Gastrocnemius medialis (tissue), 4 donors: ENCODE measurements at regions of chr1 and their contacts with region 1.

Region 1: DNA sequence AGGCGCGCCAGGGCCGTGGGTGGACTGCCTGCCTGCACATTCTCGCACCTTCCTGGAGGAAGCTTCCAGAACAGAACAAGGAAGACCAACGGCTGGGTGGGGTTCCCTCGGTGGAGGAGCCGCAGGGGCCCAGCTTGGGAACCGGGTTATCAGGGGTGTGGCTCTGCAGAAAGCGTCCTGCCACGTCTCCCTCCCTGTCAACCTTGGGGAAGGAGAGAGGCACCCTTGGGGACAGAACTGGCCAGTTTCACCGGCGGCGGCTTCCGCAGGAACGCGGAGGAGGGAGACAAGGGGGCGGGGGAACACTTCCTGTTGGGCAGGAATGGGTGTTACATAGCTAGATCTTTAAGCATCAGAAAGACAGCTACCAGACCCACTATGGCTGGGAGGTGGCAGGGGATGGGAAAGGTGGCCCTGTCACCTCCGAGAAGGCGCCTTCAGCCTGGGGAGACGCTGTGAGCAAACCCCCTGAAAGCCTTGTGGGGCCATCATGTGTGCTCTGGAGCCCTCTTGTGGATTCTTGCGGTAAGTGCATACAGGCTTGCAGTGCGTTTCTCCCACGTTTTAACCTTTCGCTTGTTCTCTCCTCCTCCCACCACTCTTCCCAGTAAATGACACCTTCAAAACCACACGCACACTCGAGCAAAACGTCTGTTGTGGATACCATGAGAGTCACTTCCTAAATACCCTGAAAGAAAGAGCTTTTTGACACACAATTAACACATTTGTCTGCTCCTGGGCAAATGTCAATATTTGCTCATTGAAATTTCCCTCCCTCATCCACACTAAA is 3.8 kb upstream of the PLEKHA6 start:
- DNase-seq: peak; percentile 32 to 48
- ATAC-seq: peak; percentile 74 to 85
- H3K4me3 ChIP-seq: peak overlapping the region; percentile 40 to 51 (median 45)
- H3K27ac ChIP-seq: peak overlapping the region; percentile 0 to 49 (median 28)
- H3K4me1 ChIP-seq: peaks cover 9% of the 10 kb centered on the region in 2 donors
- H3K27me3 ChIP-seq: peaks cover 0 to 5% (median 0%) of the 10 kb centered on the region in 3 donors
- CTCF ChIP-seq: peak; percentile 93 to 96 (median 95)
- POLR2A ChIP-seq: no peak

Region 2: GRCh38 chr1:204154568-204155255 is 208.8 kb before region 1 on chr1:
- in situ Hi-C with region 1: loop called in 1 of 4 experiments (anchors 5 kb)
- intact Hi-C with region 1: no loop called
- DNase-seq: no peak
- ATAC-seq: no peak
- H3K4me3 ChIP-seq: no peak overlapping the region
- H3K27ac ChIP-seq: no peak overlapping the region
- H3K4me1 ChIP-seq: peaks cover 5 to 7% of the 10 kb centered on the region in 2 donors
- H3K27me3 ChIP-seq: peaks cover 7 to 28% (median 20%) of the 10 kb centered on the region in 3 donors
- CTCF ChIP-seq: no peak
- POLR2A ChIP-seq: no peak

Region 3: DNA sequence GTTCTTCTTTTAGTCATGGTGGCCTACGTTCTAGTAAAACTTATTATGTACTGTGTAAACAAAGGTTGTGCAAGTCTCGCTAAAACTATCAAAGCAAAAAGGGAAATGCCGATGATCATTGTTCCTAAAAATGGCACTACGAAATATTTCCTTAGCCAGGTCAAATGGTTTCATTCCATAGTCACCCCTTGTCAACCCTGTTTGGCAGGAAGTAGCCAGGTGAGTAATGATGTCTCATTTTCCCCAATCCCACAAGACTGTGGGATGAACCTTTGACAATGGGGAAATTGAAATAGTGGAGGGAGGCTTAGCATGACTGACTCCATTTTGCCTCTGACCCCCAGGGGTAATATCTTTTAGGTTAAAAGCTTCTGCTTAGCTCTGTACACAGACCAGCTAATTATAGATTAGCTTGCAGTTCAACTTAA is 191.8 kb before region 1 on chr1:
- in situ Hi-C with region 1: loop called in 2 of 4 experiments (anchors 5 to 10 kb)
- intact Hi-C with region 1: no loop called
- DNase-seq: no peak
- ATAC-seq: no peak
- H3K4me3 ChIP-seq: no peak overlapping the region
- H3K27ac ChIP-seq: no peak overlapping the region
- H3K4me1 ChIP-seq: no peaks in the 10 kb centered on the region
- H3K27me3 ChIP-seq: peaks cover 0 to 4% (median 3%) of the 10 kb centered on the region in 3 donors
- CTCF ChIP-seq: no peak
- POLR2A ChIP-seq: no peak

Region 4: GRCh38 chr1:204257954-204258752 is 105.4 kb before region 1 on chr1:
- in situ Hi-C with region 1: no loop called
- intact Hi-C with region 1: loop called (anchors 1 kb)
- DNase-seq: no peak
- ATAC-seq: no peak
- H3K4me3 ChIP-seq: no peak overlapping the region
- H3K27ac ChIP-seq: no peak overlapping the region
- H3K4me1 ChIP-seq: peaks cover 0 to 5% of the 10 kb centered on the region in 2 donors
- H3K27me3 ChIP-seq: no peaks in the 10 kb centered on the region
- CTCF ChIP-seq: peak; percentile 27 to 57 (median 46)
- POLR2A ChIP-seq: no peak

Region 5: DNA sequence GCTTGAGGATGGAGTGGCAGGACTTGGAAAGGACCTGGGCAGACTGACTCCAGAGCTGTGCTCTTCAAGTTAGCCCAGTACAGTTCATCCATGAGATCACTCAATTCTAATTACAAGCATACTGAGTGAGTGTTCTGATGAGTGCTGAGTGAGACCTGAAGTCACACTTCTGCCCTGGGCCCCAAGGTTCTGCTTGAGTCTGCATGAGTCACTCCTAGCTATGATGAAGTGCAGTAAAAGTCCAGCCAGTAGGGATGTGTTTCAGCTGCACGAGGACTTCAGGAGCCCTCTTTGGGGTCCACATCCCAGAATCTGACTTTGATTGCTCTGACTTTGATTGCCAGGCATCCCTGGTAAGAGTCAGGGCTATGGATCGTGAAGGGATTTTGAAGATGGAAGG is 39.6 kb before region 1 on chr1:
- in situ Hi-C with region 1: no loop called
- intact Hi-C with region 1: no loop called
- DNase-seq: no peak
- ATAC-seq: no peak
- H3K4me3 ChIP-seq: no peak overlapping the region
- H3K27ac ChIP-seq: no peak overlapping the region
- H3K4me1 ChIP-seq: no peaks in the 10 kb centered on the region
- H3K27me3 ChIP-seq: no peaks in the 10 kb centered on the region
- CTCF ChIP-seq: no peak
- POLR2A ChIP-seq: no peak